OCI-LY7 (cell line): ENCODE measurements at regions of chr7 and their contacts with region 1.

Region 1: GRCh38 chr7:151028131-151028947 is at the start of gene ABCB8:
- DNase-seq: peak; percentile 99
- H3K4me3 ChIP-seq: peak within 1 kb of the TSS; percentile 80
- H3K27ac ChIP-seq: no peak within 1 kb of the TSS
- H3K4me1 ChIP-seq: peaks cover 23% of the 10 kb centered on the region
- CTCF ChIP-seq: peak; percentile 54
- total RNA-seq, gene ABCB8: 29.5 and 32.0 TPM in 2 replicates

Region 2: DNA sequence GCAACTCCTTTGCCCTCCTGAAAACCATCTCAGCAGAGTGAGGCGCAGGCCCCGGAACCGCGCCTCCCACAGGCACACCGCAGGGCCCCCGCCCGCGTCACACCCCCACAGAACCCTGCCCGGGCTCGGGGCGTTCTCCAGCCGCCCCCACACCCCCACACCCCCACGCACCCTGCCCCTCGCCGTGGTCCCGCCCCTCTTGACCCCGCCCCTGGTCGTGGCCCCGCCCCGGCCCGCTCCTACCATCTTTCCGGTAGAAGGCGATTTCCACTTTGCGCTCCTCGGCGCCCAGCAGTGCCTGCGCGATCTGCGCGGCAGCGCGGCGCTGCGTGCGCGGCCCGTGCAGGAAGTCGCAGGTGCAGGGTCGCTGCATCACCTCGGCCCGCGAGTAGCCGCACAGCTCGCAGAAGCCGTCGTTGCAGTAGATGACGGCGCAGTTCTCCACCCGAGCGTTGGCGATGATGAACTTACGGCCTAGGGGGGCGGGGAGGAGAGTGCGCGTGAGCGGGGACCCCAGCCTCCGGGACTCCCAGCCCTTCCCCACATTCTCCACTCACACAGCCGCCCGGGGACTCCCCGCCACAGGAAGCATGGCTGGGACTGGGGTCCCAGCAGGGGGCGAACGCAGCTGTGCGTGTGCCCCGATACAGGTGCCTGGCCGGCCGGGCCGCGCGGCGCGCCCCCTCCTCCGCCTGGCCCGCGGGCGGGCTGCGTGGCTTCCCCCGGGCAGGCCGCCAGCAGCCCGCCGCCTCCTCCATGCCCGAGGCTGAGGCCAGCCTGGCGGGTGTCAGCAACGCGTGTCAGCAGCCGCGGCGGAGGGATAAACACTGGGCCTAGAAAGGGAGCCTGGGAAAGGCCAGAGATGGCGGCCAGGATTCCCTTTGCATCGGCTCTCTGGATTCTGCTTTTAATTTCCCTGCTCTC is 53.6 kb before region 1 on chr7:
- CTCF ChIA-PET with region 1: no interaction called
- POLR2A ChIA-PET with region 1: interaction called, 4 read pairs
- intact Hi-C with region 1: loop called (anchors 1 kb)
- DNase-seq: peak; percentile 92
- H3K4me3 ChIP-seq: peak overlapping the region; percentile 72
- H3K27ac ChIP-seq: peak overlapping the region; percentile 84
- H3K4me1 ChIP-seq: peaks cover 64% of the 10 kb centered on the region
- CTCF ChIP-seq: peak; percentile 67

Region 3: GRCh38 chr7:151057989-151058780 is 29.8 kb after region 1 on chr7:
- CTCF ChIA-PET with region 1: interaction called, 3 read pairs
- POLR2A ChIA-PET with region 1: interaction called, 3 read pairs
- intact Hi-C with region 1: loop called (anchors 1 kb)
- DNase-seq: peak; percentile 99
- H3K4me3 ChIP-seq: peak overlapping the region; percentile 98
- H3K27ac ChIP-seq: peak overlapping the region; percentile 70
- H3K4me1 ChIP-seq: peaks cover 37% of the 10 kb centered on the region
- CTCF ChIP-seq: no peak

Region 4: GRCh38 chr7:151137076-151137675 is 108.8 kb after region 1 on chr7:
- CTCF ChIA-PET with region 1: no interaction called
- POLR2A ChIA-PET with region 1: no interaction called
- intact Hi-C with region 1: no loop called
- DNase-seq: no peak
- H3K4me3 ChIP-seq: no peak overlapping the region
- H3K27ac ChIP-seq: no peak overlapping the region
- H3K4me1 ChIP-seq: no peaks in the 10 kb centered on the region
- CTCF ChIP-seq: no peak